Activated CD4-positive, alpha-beta T cell treated with anti-CD3 and anti-CD28 coated beads for 36 hours (primary cell): ENCODE measurements at regions of chr7 and their contacts with region 1.

Region 1: DNA sequence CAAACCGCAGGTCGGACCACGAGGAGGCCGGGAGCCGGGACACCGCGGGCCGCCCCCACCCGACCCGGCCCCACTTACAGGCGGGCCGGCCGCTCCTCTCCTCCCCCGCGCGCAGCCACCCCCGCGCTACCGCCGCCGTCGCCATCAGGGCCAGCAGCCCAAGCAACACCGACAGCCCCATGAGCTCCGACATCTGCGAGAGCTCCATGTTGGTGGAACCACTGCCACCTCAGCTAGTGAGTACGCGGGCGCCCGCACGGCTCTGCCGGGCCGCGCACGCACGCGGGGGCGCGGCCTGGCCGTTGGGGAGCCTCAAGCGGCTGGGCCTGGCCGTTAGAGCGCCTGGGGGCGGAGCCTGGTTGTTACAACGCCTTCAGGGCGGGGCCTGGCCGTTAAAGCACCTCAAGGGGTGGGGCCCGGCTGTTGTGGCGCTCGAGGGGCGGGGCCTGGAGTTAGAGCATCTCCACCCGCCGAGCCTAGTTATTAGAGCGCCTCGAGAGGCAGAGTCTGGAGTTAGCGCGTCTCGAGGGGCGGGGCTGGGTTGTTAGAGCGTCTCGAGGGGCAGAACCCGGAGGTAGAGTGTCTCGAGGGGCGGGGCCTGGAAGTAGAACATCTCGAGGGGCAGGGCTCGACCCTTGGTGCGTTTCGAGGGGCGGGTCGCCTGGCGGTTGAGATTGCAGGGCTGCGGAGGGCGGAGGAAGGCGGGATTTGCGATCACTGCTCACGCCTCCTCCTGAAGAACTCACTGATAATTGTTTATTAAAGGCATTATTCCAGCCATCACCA is at the start of gene TBL2:
- DNase-seq: peak; percentile 100
- ATAC-seq: peak; percentile 92
- H3K4me3 Mint-ChIP-seq: peak within 1 kb of the TSS; percentile 98
- H3K27ac Mint-ChIP-seq: peak within 1 kb of the TSS; percentile 98
- H3K4me1 Mint-ChIP-seq: peaks cover 26% of the 10 kb centered on the region
- H3K27me3 Mint-ChIP-seq: no peaks in the 10 kb centered on the region
- total RNA-seq, gene TBL2: 30.6 to 34.7 TPM

Region 2: DNA sequence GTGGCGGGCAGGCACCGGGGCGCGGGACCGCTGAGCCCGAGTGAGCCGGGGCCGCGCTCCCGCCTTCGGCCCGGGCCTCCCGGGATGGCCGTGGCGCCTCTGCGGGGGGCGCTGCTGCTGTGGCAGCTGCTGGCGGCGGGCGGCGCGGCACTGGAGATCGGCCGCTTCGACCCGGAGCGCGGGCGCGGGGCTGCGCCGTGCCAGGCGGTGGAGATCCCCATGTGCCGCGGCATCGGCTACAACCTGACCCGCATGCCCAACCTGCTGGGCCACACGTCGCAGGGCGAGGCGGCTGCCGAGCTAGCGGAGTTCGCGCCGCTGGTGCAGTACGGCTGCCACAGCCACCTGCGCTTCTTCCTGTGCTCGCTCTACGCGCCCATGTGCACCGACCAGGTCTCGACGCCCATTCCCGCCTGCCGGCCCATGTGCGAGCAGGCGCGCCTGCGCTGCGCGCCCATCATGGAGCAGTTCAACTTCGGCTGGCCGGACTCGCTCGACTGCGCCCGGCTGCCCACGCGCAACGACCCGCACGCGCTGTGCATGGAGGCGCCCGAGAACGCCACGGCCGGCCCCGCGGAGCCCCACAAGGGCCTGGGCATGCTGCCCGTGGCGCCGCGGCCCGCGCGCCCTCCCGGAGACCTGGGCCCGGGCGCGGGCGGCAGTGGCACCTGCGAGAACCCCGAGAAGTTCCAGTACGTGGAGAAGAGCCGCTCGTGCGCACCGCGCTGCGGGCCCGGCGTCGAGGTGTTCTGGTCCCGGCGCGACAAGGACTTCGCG is 144.4 kb before region 1 on chr7:
- CTCF ChIA-PET with region 1: no interaction called
- POLR2A ChIA-PET with region 1: no interaction called
- intact Hi-C with region 1: loop called in 1 of 2 experiments (anchors 1 kb)
- DNase-seq: peak; percentile 53
- ATAC-seq: peak; percentile 38
- H3K4me3 Mint-ChIP-seq: peak overlapping the region; percentile 23
- H3K27ac Mint-ChIP-seq: no peak overlapping the region
- H3K4me1 Mint-ChIP-seq: no peaks in the 10 kb centered on the region
- H3K27me3 Mint-ChIP-seq: peaks cover 11% of the 10 kb centered on the region

Region 3: GRCh38 chr7:73451780-73452398 is 126.6 kb before region 1 on chr7:
- CTCF ChIA-PET with region 1: no interaction called
- POLR2A ChIA-PET with region 1: no interaction called
- intact Hi-C with region 1: no loop called
- DNase-seq: no peak
- ATAC-seq: peak; percentile 71
- H3K4me3 Mint-ChIP-seq: no peak overlapping the region
- H3K27ac Mint-ChIP-seq: no peak overlapping the region
- H3K4me1 Mint-ChIP-seq: peaks cover 9% of the 10 kb centered on the region
- H3K27me3 Mint-ChIP-seq: no peaks in the 10 kb centered on the region

Region 4: DNA sequence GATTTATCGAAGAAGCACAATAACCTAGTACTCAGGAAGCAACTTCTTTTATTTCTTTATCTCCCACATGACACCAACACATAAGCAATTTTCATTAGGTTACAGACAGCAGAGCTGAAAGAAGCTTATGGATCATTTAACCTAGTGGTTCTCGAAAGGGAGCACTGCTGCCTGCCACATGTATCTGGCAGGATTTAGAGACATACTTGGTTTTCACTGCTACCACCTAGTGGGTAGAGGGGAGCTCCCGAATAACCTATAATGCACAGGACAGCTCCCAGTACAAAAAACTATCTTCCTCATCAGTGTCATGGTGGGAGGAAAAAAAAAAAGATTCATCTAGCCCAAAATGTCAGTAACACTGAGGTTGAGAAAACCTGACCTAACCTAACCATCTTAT is 110.4 kb before region 1 on chr7:
- CTCF ChIA-PET with region 1: no interaction called
- POLR2A ChIA-PET with region 1: no interaction called
- intact Hi-C with region 1: no loop called
- DNase-seq: no peak
- ATAC-seq: no peak
- H3K4me3 Mint-ChIP-seq: no peak overlapping the region
- H3K27ac Mint-ChIP-seq: no peak overlapping the region
- H3K4me1 Mint-ChIP-seq: no peaks in the 10 kb centered on the region
- H3K27me3 Mint-ChIP-seq: no peaks in the 10 kb centered on the region

Region 5: GRCh38 chr7:73557108-73557396 is 21.5 kb before region 1 on chr7:
- CTCF ChIA-PET with region 1: interaction called, 4 read pairs
- POLR2A ChIA-PET with region 1: interaction called, 6 read pairs
- intact Hi-C with region 1: loop called (anchors 1 kb)
- DNase-seq: peak; percentile 95
- ATAC-seq: peak; percentile 92
- H3K4me3 Mint-ChIP-seq: peak overlapping the region; percentile 93
- H3K27ac Mint-ChIP-seq: peak overlapping the region; percentile 91
- H3K4me1 Mint-ChIP-seq: peaks cover 35% of the 10 kb centered on the region
- H3K27me3 Mint-ChIP-seq: no peaks in the 10 kb centered on the region

Region 6: DNA sequence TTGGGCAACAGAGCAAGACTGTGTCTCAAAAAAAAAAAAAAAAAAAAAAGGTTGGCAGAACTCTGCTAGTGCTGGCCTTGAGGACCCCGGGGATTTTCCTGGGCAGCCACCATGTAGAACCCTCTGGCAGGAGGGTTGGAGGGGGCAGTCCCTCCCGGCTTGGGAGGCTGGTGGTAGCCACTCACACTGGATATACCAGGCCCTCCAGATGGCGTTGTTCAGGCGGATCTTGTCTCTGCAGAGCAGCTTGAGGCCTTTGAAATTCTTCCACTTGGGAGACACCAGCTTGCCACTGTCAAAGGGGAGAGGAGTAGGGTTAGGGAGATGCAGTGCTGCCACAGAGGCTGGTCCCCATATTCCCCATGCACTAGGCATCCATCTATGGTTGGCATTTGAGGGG is 37.4 kb after region 1 on chr7:
- CTCF ChIA-PET with region 1: no interaction called
- POLR2A ChIA-PET with region 1: no interaction called
- intact Hi-C with region 1: no loop called
- DNase-seq: no peak
- ATAC-seq: no peak
- H3K4me3 Mint-ChIP-seq: no peak overlapping the region
- H3K27ac Mint-ChIP-seq: no peak overlapping the region
- H3K4me1 Mint-ChIP-seq: no peaks in the 10 kb centered on the region
- H3K27me3 Mint-ChIP-seq: peaks cover 19% of the 10 kb centered on the region

Region 7: GRCh38 chr7:73667344-73668102 is 89.0 kb after region 1 on chr7 and contains the start of gene VPS37D:
- CTCF ChIA-PET with region 1: interaction called, 3 read pairs
- POLR2A ChIA-PET with region 1: no interaction called
- intact Hi-C with region 1: loop called (anchors 1 kb)
- DNase-seq: peak; percentile 96
- ATAC-seq: peak; percentile 94
- H3K4me3 Mint-ChIP-seq: peak within 1 kb of the TSS; percentile 57
- H3K27ac Mint-ChIP-seq: no peak within 1 kb of the TSS
- H3K4me1 Mint-ChIP-seq: peaks cover 5% of the 10 kb centered on the region
- H3K27me3 Mint-ChIP-seq: peaks cover 40% of the 10 kb centered on the region
- total RNA-seq, gene VPS37D: 0.35 to 0.39 TPM

Region 8: GRCh38 chr7:73718905-73719805 is 140.6 kb after region 1 on chr7 and contains the start of gene STX1A:
- CTCF ChIA-PET with region 1: interaction called, 3 read pairs
- POLR2A ChIA-PET with region 1: no interaction called
- intact Hi-C with region 1: loop called in 1 of 2 experiments (anchors 1 kb)
- DNase-seq: peak; percentile 85
- ATAC-seq: peak; percentile 59
- H3K4me3 Mint-ChIP-seq: peak within 1 kb of the TSS; percentile 75
- H3K27ac Mint-ChIP-seq: peak within 1 kb of the TSS; percentile 66
- H3K4me1 Mint-ChIP-seq: peaks cover 34% of the 10 kb centered on the region
- H3K27me3 Mint-ChIP-seq: peaks cover 4% of the 10 kb centered on the region
- total RNA-seq, gene STX1A: 16.6 to 16.8 TPM

Region 9: GRCh38 chr7:73851410-73852234 is 273.1 kb after region 1 on chr7:
- CTCF ChIA-PET with region 1: no interaction called
- POLR2A ChIA-PET with region 1: no interaction called
- intact Hi-C with region 1: loop called in 1 of 2 experiments (anchors 2 kb)
- DNase-seq: peak; percentile 60
- ATAC-seq: peak; percentile 96
- H3K4me3 Mint-ChIP-seq: no peak overlapping the region
- H3K27ac Mint-ChIP-seq: peak overlapping the region; percentile 65
- H3K4me1 Mint-ChIP-seq: peaks cover 33% of the 10 kb centered on the region
- H3K27me3 Mint-ChIP-seq: peaks cover 12% of the 10 kb centered on the region

Region 10: DNA sequence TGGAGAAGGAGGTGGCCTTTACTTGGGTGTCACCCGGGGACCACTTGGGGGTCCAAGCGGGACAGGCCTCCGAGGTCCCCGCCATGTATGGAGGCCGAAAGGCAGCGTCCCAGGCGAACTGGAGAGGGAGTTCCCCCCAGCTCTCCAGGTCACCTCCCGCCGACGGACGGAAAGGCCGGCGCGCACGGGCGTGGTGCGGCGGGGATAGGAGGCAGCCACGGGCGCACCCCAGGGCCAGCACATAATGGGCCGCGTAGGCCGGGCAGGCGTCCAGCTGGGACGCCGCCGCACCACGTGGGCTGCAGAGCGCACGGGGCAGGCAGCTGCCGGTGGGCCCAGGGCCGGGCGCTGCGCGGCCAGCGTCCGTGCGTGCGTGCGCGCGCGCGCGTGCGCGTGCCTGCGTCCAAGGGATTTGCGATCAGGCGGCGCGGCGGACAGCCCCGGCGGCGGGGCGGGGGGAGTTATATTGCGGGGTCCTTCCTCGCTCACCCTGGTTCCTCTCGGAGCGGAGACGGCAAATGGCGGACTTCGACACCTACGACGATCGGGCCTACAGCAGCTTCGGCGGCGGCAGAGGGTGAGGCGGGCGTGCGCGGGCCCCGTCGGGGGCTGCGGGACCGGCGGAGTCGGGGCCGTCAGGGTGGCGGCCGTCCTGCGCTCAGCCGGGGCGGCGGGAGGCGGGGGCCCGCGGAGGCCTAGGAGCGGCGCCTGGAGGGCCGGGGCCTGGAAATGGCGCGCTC is 595.5 kb after region 1 on chr7 and contains the start of gene EIF4H:
- CTCF ChIA-PET with region 1: no interaction called
- POLR2A ChIA-PET with region 1: no interaction called
- intact Hi-C with region 1: loop called in 1 of 2 experiments (anchors 5 kb)
- DNase-seq: peak; percentile 97
- ATAC-seq: peak; percentile 75
- H3K4me3 Mint-ChIP-seq: peak within 1 kb of the TSS; percentile 94
- H3K27ac Mint-ChIP-seq: peak within 1 kb of the TSS; percentile 94
- H3K4me1 Mint-ChIP-seq: peaks cover 41% of the 10 kb centered on the region
- H3K27me3 Mint-ChIP-seq: no peaks in the 10 kb centered on the region
- total RNA-seq, gene EIF4H: 441 to 496 TPM